A549 (cell line): ENCODE measurements at regions of chr1 and their contacts with region 1.

Region 1: DNA sequence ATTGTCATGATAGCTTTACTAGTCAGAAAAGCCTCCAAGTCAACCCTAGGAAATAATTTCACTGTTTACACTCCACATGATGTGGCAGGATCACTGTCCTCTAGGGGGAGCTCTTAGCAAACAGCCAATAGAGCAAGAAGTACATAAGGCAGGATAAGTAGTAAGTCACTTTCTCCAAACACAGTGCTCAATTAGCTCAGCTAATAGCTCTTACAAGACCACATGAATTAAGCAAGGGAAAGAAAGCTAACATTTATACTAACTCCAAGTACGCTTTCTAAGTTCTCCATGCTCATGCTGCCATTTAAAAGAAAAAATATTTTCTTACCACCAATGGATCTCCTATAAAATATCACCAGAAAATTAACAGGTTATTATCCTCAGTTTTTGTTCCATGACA is 66.9 kb upstream of the LRIF1 start:
- DNase-seq: peak; percentile 2 to 61
- ATAC-seq: peak; percentile 59 to 79; a peak in 4 of 6 replicates
- H3K4me3 ChIP-seq: no peak overlapping the region
- H3K27ac ChIP-seq: no peak overlapping the region
- H3K4me1 ChIP-seq: no peaks in the 10 kb centered on the region
- CTCF ChIP-seq: peak; percentile 56
- EP300 ChIP-seq: no peak
- POLR2A ChIP-seq: no peak
- RAD21 ChIP-seq: no peak

Region 2: DNA sequence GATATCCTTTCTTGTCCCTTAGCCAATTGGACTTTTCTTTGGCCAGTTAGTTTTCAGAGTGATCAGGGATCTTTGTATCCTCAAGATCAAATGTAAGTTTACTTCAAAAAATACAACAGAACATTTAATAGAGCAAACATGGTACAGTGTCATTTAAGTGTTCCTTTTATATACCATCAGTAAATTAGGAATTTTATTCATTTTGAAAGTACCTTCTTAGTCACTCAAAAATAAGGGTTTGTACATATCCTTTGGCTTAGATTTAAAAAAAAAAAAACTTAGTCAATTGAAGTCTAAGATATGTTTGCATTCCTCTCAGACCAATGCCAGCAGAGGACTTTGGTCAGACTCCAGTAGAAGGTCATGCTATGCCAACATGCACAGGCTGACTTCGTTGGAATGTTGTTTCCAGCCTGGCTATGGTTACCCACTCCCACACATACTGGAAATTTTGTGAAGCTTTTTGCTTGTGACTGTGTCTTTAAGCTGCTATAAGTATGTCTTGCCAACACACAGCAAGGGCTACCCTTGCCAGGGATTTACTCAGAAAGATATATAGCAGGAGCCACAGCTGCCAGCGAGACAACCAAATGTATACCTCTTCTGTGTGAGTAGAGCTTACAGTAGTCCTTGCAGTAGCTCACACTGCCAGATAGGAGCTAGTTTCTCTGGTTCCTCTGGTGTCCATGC is 14.6 kb after region 1 on chr1:
- CTCF ChIA-PET with region 1: interaction called, 12 read pairs
- POLR2A ChIA-PET with region 1: no interaction called
- DNase-seq: no peak
- ATAC-seq: no peak
- H3K4me3 ChIP-seq: no peak overlapping the region
- H3K27ac ChIP-seq: no peak overlapping the region
- H3K4me1 ChIP-seq: no peaks in the 10 kb centered on the region
- CTCF ChIP-seq: no peak
- EP300 ChIP-seq: no peak
- POLR2A ChIP-seq: no peak
- RAD21 ChIP-seq: no peak